Mammary epithelial cell (primary cell): ENCODE measurements at regions of chr22 and their contacts with region 1.

Region 1: DNA sequence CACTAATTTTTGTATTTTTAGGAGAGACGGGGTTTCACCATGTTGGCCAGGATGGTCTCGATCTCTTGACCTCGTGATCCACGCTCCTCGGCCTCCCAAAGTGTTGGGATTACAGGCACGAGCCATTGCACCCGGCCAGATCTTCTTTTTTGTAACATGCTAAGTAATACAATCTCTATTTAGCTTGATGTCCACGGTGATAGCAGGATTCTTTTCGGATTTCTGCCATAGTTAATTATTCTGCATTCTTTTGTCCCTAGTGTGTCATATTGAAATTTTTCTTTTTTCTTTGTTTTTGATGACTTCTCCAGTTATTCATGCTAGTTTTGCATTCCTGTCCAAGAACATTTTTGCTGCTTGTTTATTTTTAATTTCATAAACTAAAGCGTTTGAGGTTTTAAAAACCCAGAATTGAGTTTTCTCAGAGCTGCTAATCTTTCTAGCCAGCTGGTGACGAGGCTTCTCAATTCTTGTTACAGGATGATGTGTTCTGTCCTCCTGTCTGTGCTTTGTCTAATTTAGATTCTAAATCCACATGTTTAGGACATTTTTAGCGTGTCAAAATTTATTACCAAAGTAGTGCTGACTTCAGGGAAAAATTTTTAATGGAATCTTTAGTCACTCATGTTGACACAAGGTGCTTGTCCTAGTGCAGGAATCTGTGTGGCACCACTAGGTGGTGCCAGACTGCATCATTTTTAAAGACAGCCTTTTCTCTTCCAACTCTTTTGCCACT is 21.8 kb downstream of the NF2 start:
- DNase-seq: peak; percentile 69
- H3K4me3 ChIP-seq: peak overlapping the region in 1 of 3 experiments; percentile 10
- H3K27ac ChIP-seq: peak overlapping the region; percentile 65
- H3K4me1 ChIP-seq: peaks cover 77% of the 10 kb centered on the region
- H3K27me3 ChIP-seq: no peaks in the 10 kb centered on the region
- CTCF ChIP-seq: peak; percentile 86 to 95

Region 2: GRCh38 chr22:29394931-29395581 is 230.2 kb before region 1 on chr22:
- CTCF ChIA-PET with region 1: no interaction called
- dilution Hi-C with region 1: no loop called
- in situ Hi-C with region 1: no loop called
- intact Hi-C with region 1: loop called (anchors 5 kb)
- DNase-seq: peak; percentile 57
- H3K4me3 ChIP-seq: no peak overlapping the region
- H3K27ac ChIP-seq: no peak overlapping the region
- H3K4me1 ChIP-seq: no peaks in the 10 kb centered on the region
- H3K27me3 ChIP-seq: no peaks in the 10 kb centered on the region
- CTCF ChIP-seq: peak; percentile 84 to 89

Region 3: DNA sequence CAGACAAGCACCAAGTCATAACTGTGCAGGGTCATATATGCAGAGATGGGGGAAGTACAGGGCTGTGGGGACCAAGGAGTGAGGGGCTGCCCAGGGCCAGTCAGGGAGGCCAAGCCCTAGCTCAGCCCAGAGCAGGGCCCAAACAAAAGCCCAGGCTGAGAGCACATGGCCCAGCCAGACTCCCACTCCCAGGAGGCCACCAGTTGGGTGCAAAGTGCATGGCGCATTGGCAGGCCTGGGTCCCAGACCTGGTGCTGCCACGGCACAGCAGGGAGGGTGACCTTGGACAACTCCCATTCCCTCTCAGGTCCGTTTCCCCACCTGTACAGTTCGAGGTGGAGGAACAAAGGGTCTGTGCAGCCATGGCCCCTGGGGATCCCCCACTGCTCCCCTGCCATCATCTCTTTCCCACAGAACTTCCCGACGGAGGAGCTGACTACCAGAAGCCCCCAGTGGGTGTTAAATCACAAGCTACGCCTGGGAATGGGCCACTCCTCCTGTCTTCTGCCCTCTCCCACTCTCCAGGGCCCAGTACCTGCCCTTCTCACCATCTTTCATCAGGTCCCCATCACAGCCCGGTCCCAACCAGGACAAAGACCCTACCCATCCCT is 45.0 kb before region 1 on chr22:
- CTCF ChIA-PET with region 1: no interaction called
- dilution Hi-C with region 1: no loop called
- in situ Hi-C with region 1: no loop called
- intact Hi-C with region 1: no loop called
- DNase-seq: no peak
- H3K4me3 ChIP-seq: peak overlapping the region; percentile 63 to 70 (median 67)
- H3K27ac ChIP-seq: no peak overlapping the region
- H3K4me1 ChIP-seq: peaks cover 3% of the 10 kb centered on the region
- H3K27me3 ChIP-seq: no peaks in the 10 kb centered on the region
- CTCF ChIP-seq: no peak

Region 4: GRCh38 chr22:29593923-29594322 is 31.3 kb before region 1 on chr22:
- CTCF ChIA-PET with region 1: no interaction called
- dilution Hi-C with region 1: no loop called
- in situ Hi-C with region 1: no loop called
- intact Hi-C with region 1: loop called (anchors 5 kb)
- DNase-seq: no peak
- H3K4me3 ChIP-seq: no peak overlapping the region
- H3K27ac ChIP-seq: no peak overlapping the region
- H3K4me1 ChIP-seq: no peaks in the 10 kb centered on the region
- H3K27me3 ChIP-seq: no peaks in the 10 kb centered on the region
- CTCF ChIP-seq: no peak

Region 5: DNA sequence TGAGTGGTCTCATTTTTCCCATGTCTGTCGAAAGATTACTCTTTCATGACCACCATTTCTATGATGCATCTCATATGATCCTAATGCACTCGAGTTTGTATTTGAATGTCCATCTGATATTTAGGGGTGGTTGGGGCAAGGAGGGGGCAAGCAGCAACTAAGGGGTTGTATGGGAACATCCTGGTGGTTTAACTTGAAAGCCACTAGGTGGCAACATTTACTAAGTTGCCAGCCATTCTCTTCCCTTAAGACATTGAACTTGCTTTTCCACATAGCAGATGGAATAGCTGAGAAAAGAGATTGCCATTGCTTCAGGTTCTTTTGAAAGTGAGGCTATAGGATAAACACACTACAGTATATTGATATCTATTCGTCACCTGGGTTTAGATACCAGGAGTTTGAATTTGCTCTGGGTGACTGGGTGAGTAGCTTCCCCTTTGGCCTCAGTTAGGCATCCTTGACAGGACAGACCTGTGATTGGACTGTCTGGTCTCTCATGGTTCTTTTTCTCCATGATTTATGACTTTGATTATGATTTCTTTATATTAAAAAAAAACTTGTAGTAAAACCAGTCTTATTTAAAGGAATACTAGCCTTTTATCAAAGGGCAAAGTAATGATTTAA is 10.6 kb after region 1 on chr22:
- CTCF ChIA-PET with region 1: no interaction called
- dilution Hi-C with region 1: no loop called
- in situ Hi-C with region 1: no loop called
- intact Hi-C with region 1: loop called (anchors 1 kb)
- DNase-seq: peak; percentile 39
- H3K4me3 ChIP-seq: no peak overlapping the region
- H3K27ac ChIP-seq: no peak overlapping the region
- H3K4me1 ChIP-seq: peaks cover 3% of the 10 kb centered on the region
- H3K27me3 ChIP-seq: no peaks in the 10 kb centered on the region
- CTCF ChIP-seq: peak; percentile 56 to 76

Region 6: DNA sequence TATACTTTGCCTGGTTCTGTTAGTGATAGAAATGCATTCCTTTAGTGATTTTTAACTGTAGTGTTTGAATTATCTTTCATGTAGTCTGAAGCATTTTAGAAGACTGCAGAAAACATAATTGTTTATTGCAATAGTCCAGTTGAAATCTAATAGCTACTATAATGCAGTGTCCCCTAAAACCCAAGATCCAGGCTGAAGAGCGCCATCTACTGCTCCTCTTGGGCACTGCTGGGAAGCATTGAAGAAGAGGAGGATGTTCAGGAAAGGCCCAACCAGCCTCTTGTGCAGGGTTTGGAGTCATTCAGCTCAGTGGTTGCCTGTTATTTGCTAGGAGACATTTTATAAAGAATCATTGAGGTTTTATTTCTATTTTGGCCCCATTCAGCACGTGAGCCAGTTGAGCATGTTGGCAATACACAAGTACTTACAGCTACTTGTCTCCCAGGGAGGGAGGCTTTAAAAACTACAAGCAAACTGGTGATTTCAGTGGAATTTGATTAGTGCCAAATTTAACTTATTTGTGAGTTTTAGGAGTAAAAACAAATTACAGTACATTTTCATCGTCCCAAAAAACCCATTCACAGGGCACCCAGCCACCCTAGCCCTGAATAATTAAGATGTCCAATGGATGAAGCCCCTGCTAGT is 380.1 kb after region 1 on chr22:
- CTCF ChIA-PET with region 1: interaction called, 11 read pairs
- dilution Hi-C with region 1: no loop called
- in situ Hi-C with region 1: no loop called
- intact Hi-C with region 1: no loop called
- DNase-seq: peak; percentile 57
- H3K4me3 ChIP-seq: no peak overlapping the region
- H3K27ac ChIP-seq: no peak overlapping the region
- H3K4me1 ChIP-seq: no peaks in the 10 kb centered on the region
- H3K27me3 ChIP-seq: no peaks in the 10 kb centered on the region
- CTCF ChIP-seq: peak; percentile 98 to 99